ENCODE measurements at regions of chr7 and their contacts with region 1.

Region 1: DNA sequence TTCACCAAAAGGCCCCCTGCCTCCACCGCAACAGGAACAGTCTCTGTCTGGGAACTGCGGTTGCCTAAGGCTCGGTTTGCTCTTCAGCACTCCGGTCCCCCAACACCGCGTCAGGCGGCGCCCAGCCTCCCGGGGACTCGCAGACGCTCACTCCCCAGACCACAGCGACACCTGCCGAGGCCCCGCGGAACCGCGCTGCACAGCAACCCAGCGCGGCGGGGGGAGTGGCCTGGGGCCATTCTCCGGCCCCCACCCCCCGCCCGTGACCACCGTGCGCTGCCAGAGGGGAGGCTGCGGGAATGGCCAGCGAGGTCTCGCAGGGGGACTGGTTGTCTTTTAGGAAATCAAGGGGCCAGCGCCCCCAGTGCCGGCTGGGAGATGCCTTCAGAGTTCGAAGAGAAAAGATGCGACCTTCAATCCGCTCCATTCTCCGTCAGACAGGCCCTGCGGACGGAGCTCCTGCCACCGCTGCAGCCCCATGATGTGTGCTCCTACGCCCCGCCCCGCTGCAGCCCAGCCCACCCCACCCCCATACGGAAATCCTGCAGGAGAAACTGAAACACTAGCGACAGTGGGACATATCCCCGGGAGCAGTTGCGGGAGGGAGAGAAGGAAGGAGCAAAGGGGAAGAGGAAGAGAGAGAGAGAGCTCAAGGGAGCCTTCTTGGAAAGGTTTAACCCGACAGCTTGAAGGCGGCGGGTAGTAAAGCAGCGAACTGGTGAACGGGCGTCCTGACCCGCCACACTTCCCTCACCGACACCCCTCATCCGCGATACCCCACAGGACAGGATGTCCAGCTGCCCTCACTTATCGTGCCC is 137.4 kb upstream of the CDCA7L start:
- DNase-seq: peak; percentile 82
- H3K4me3 Mint-ChIP-seq: peak overlapping the region; percentile 71
- H3K27ac Mint-ChIP-seq: no peak overlapping the region
- H3K4me1 Mint-ChIP-seq: peaks cover 17% of the 10 kb centered on the region
- H3K27me3 Mint-ChIP-seq: peaks cover 45% of the 10 kb centered on the region

Region 2: DNA sequence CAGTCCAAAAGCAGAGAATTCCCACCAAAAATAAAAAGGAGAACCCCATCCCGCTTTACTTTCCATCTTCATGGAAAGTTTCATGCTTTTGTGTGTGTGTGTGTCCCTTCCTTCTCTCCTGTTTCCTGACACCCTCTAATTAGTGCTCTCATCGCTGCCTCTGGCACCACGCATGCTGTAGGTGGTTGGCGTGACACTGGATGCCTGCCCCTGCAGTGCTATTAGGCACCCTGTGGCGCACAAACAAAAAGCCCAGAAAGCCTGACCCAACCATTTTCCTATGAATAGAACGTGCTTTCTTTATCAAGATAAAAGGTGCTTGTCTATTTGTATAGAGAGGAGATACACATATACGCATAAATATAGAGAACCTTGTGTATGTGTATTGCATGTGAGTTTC is 16.6 kb before region 1 on chr7:
- CTCF ChIA-PET with region 1: interaction called, 13 read pairs
- POLR2A ChIA-PET with region 1: no interaction called
- DNase-seq: no peak
- H3K4me3 Mint-ChIP-seq: no peak overlapping the region
- H3K27ac Mint-ChIP-seq: no peak overlapping the region
- H3K4me1 Mint-ChIP-seq: no peaks in the 10 kb centered on the region
- H3K27me3 Mint-ChIP-seq: peaks cover 4% of the 10 kb centered on the region

Region 3: GRCh38 chr7:22094413-22095342 is 11.6 kb after region 1 on chr7:
- CTCF ChIA-PET with region 1: interaction called, 33 read pairs
- POLR2A ChIA-PET with region 1: no interaction called
- DNase-seq: no peak
- H3K4me3 Mint-ChIP-seq: no peak overlapping the region
- H3K27ac Mint-ChIP-seq: no peak overlapping the region
- H3K4me1 Mint-ChIP-seq: no peaks in the 10 kb centered on the region
- H3K27me3 Mint-ChIP-seq: peaks cover 22% of the 10 kb centered on the region

Region 4: DNA sequence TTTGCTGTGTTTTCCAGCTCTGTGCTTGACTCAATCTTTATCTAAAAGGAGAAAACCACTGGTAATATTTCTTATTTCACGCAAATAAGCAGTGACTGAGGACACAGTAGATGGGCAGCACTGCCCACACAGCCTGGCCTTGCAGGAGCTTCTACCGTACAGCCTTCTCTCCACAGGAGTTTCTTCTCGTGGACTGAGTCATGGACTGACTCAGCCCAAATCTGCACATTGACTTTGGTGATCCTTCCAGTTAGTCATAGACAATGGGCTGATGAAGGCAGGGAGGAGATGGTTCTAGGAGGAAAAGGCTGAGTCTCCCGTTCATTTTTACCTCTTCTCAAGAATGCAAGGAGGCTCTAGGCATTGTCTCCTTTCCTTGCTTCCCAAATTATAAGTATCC is 73.1 kb after region 1 on chr7:
- CTCF ChIA-PET with region 1: no interaction called
- POLR2A ChIA-PET with region 1: no interaction called
- DNase-seq: no peak
- H3K4me3 Mint-ChIP-seq: no peak overlapping the region
- H3K27ac Mint-ChIP-seq: no peak overlapping the region
- H3K4me1 Mint-ChIP-seq: peaks cover 16% of the 10 kb centered on the region
- H3K27me3 Mint-ChIP-seq: peaks cover 10% of the 10 kb centered on the region

Region 5: GRCh38 chr7:22214000-22214399 is 130.9 kb after region 1 on chr7:
- CTCF ChIA-PET with region 1: no interaction called
- POLR2A ChIA-PET with region 1: no interaction called
- DNase-seq: no peak
- H3K4me3 Mint-ChIP-seq: no peak overlapping the region
- H3K27ac Mint-ChIP-seq: no peak overlapping the region
- H3K4me1 Mint-ChIP-seq: no peaks in the 10 kb centered on the region
- H3K27me3 Mint-ChIP-seq: peaks cover 62% of the 10 kb centered on the region